Gastrocnemius medialis (tissue), 4 donors: ENCODE measurements at regions of chr10 and their contacts with region 1.

Region 1: GRCh38 chr10:102641880-102642735 is 2.2 kb upstream of the TRIM8 start:
- DNase-seq: peak; percentile 99
- ATAC-seq: peak; percentile 50 to 55
- H3K4me3 ChIP-seq: peak overlapping the region; percentile 62 to 90 (median 80)
- H3K27ac ChIP-seq: peak overlapping the region; percentile 99 to 100 (median 100)
- H3K4me1 ChIP-seq: peaks cover 12 to 15% of the 10 kb centered on the region in 2 donors
- H3K27me3 ChIP-seq: no peaks in the 10 kb centered on the region
- CTCF ChIP-seq: no peak
- POLR2A ChIP-seq: peak; percentile 96 to 98

Region 2: GRCh38 chr10:102621438-102622325 is 20.4 kb before region 1 on chr10:
- in situ Hi-C with region 1: no loop called
- intact Hi-C with region 1: loop called (anchors 2 kb)
- DNase-seq: no peak
- ATAC-seq: no peak
- H3K4me3 ChIP-seq: no peak overlapping the region
- H3K27ac ChIP-seq: peak overlapping the region; percentile 20 to 89 (median 54)
- H3K4me1 ChIP-seq: peaks cover 63 to 67% of the 10 kb centered on the region in 2 donors
- H3K27me3 ChIP-seq: no peaks in the 10 kb centered on the region
- CTCF ChIP-seq: no peak
- POLR2A ChIP-seq: no peak

Region 3: GRCh38 chr10:102669206-102670064 is 27.3 kb after region 1 on chr10:
- in situ Hi-C with region 1: no loop called
- intact Hi-C with region 1: loop called (anchors 1 kb)
- DNase-seq: peak; percentile 89 to 91
- ATAC-seq: peak; percentile 88 to 91
- H3K4me3 ChIP-seq: peak overlapping the region in 1 of 4 donors; percentile 28
- H3K27ac ChIP-seq: peak overlapping the region; percentile 69 to 93 (median 78)
- H3K4me1 ChIP-seq: peaks cover 25 to 33% of the 10 kb centered on the region in 2 donors
- H3K27me3 ChIP-seq: no peaks in the 10 kb centered on the region
- CTCF ChIP-seq: peak in 3 of 5 experiments; percentile 39 to 67 (median 52)
- POLR2A ChIP-seq: peak in 1 of 2 donors; percentile 33

Region 4: DNA sequence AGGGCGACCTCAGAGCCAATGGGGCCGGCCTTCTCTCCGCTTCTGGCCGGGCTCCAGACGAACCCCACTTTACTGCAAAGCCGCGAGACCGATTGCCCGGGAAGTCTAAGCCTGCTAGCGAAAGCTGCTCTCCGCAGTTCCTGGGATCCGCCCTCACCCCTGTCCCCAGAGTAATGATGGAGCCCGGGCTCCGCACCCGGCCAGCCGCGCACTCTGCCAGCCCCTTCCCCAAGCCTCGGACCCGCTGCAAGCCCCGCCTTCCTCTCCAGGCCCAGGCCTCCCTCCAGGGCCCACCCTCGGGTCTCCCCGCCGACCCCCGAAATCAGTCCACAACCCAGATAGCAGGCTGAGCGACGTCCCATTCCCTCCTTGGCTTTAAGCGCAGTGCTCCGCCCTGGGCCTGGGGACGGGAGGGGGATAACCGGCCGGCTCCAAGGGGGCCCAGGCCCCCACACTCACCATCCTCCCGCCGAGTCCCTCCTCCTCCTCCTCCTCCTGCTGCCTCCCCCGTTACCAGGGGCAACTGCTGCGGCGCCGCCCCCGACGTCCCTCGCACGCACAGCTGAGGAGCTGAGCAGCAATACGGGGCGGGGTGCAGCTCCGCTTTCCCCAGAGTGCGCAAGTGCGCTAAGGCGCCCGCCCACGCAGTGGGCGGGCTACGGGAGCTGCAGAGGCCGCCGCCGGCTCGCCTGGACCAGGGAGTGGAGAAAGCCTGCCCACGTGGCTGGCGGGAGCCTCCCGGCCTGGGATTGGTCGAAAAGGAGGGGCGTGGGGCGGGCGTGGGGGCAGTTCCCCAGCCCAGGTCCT is 71.9 kb after region 1 on chr10 and contains the start of gene ARL3:
- in situ Hi-C with region 1: no loop called
- intact Hi-C with region 1: loop called (anchors 2 kb)
- DNase-seq: peak; percentile 96 to 97
- ATAC-seq: peak; percentile 88
- H3K4me3 ChIP-seq: peak within 1 kb of the TSS; percentile 74 to 99 (median 91)
- H3K27ac ChIP-seq: peak within 1 kb of the TSS; percentile 83 to 89 (median 86)
- H3K4me1 ChIP-seq: peaks cover 26 to 28% of the 10 kb centered on the region in 2 donors
- H3K27me3 ChIP-seq: no peaks in the 10 kb centered on the region
- CTCF ChIP-seq: peak; percentile 48 to 66 (median 61)
- POLR2A ChIP-seq: peak; percentile 58 to 70
- total RNA-seq, gene ARL3: 1.0 to 2.4 (median 1.5) TPM

Region 5: DNA sequence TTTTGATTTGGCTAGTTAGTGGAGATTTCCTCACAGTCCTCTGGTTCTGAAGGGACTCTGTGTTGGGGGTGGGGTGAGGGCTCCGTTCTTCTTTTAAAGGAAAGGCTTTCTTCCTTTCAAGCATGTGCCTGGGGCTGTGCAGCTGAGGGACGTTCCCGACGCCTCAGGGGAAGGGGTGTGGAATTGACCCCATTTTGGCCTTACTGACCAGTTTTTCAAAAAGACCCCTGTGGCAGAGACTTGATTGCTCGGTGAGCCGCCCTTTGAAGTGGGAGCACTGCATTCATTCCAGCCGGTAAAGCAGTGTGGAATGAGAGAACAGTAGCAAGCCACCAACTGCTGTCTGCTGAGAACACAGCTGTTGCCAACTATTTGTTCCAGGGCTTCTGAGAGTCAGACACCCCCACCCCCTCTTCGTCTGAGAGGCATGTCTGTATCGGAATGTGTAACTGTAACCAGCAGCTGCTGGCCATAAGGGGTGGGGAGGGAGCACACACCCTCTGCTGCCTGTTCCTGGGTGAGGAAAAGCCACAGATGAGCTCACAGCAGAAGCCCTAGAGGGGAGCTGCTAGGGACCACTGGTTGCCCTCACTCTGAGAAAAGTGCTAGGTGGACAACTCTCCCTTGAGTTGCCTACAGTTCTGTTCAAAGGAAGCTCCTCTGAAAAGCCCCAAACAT is 134.8 kb after region 1 on chr10:
- in situ Hi-C with region 1: no loop called
- intact Hi-C with region 1: loop called (anchors 2 kb)
- DNase-seq: peak; percentile 97 to 98
- ATAC-seq: peak; percentile 46 to 51
- H3K4me3 ChIP-seq: peak overlapping the region; percentile 65 to 78 (median 70)
- H3K27ac ChIP-seq: peak overlapping the region; percentile 91 to 100 (median 96)
- H3K4me1 ChIP-seq: peaks cover 72 to 80% of the 10 kb centered on the region in 2 donors
- H3K27me3 ChIP-seq: no peaks in the 10 kb centered on the region
- CTCF ChIP-seq: peak in 1 of 5 experiments; percentile 8
- POLR2A ChIP-seq: peak in 1 of 2 donors; percentile 90